Right ventricle myocardium superior (tissue), 1 donor: ENCODE measurements at regions of chr11 and their contacts with region 1.

Region 1: GRCh38 chr11:128624269-128625175 is 37.2 kb upstream of the ETS1 start:
- DNase-seq: no peak
- ATAC-seq: no peak

Region 2: GRCh38 chr11:128472128-128473089 is 152.1 kb before region 1 on chr11:
- intact Hi-C with region 1: loop called (anchors 10 kb)
- DNase-seq: no peak
- ATAC-seq: no peak

Region 3: DNA sequence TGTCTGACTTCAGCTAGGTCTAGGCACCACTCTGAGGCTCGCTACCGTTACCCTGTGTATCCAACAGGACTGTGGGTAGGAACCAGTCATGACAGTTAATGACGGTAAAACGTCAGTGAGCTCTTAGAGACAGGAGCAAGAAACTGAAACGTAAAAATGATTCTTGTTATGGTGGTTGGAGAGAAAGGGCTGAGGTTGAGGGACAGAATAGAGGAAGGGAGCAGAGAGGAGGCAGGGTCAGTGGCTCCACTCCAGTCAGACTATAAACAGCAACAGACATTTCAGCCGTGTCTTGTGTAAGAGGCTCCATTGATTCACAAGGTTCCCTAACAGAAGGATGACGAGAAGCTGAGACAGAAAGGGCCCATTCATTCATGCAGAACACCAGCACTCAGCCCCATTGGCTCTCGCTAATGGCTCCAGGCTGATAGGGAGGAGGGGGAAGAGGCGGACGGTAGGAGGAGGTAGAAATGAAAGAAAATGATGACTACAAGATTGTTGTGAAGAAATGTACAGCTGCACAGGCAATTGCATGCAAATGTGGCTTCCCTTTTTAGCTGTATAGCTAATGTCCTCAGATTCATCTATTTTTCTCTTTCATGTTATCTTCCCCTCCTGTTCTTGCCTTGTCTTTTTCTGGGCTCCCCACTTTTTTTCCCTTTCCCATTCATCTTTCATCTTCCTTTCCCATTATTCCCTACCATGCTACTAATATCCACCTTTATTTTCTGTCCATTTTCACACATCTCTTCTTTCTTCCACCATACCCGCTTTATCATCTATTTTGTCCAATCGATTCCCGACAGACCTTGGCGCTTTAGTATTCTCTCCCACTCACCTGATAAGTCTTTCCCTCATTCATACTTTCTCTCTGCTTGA is 71.5 kb before region 1 on chr11:
- intact Hi-C with region 1: loop called (anchors 10 kb)
- DNase-seq: no peak
- ATAC-seq: peak; percentile 7

Region 4: DNA sequence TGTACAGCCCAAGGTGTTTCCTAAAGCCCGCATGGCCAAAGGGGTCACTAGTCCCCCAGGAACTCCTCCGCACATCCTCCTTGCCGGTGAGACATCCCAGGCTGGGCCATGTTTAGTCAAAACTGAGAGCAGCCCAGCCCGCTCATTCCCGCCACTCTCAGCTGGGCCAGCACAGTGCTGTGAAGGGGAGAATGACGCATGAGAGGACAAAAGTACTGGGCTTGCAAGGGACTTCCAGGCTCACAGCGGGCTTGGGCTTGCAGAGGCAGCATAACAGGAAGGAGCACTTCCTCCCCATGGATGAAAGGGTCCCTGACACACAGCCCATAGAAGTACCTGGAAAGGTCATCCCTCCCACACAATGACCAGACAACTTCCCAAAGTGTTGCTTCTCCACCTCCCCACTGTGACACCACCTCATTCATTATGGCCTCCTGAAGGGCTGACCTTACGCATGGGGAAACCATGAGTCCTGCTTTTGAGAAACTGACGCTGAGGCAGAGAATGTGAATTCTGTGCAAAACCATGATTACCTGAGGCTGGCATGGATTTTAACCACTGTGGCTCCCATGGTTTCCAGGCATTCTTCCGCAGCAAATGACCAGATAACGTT is 56.2 kb before region 1 on chr11:
- intact Hi-C with region 1: no loop called
- DNase-seq: peak; percentile 37
- ATAC-seq: peak; percentile 31

Region 5: GRCh38 chr11:128841461-128842072 is 217.0 kb after region 1 on chr11:
- intact Hi-C with region 1: no loop called
- DNase-seq: no peak
- ATAC-seq: no peak